ENCODE measurements at regions of chr1 and their contacts with region 1.

Region 1: GRCh38 chr1:171485375-171486047 is at the start of gene PRRC2C:
- DNase-seq: peak; percentile 100
- ATAC-seq: peak; percentile 95
- H3K4me3 ChIP-seq: peak within 1 kb of the TSS; percentile 82
- H3K27ac ChIP-seq: peak within 1 kb of the TSS; percentile 84
- H3K4me1 ChIP-seq: peaks cover 33% of the 10 kb centered on the region
- H3K27me3 ChIP-seq: no peaks in the 10 kb centered on the region
- CTCF ChIP-seq: no peak; the same call in 1 of the 2 replicates
- total RNA-seq, gene PRRC2C: 199 and 225 TPM in 2 replicates

Region 2: DNA sequence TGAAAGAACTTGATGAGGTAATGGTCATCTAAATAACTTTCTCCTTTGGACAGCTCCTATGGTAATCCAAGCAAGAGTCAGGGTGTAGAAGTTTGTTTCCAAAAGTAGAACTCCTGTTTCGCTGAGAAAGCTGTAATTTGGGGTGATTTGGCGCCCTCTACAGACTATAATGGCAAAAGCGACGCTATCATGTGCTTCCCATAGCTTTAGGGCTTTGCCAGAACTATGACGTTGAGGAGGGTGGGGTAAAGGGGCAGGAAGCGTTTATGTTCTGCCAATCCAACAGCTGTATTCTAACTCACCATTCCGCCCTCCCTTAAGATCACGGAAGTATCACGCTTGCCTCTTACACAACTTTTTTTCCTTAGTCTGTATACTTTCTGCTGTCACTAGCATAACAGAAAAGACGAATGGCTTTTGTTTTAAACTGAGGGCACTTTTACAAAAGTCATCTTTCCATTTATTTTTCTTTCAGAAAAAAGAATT is 171.6 kb before region 1 on chr1 and contains the start of gene FMO4:
- CTCF ChIA-PET with region 1: interaction called, 16 read pairs
- POLR2A ChIA-PET with region 1: no interaction called
- intact Hi-C with region 1: loop called (anchors 1 kb)
- DNase-seq: peak; percentile 100
- ATAC-seq: peak; percentile 100
- H3K4me3 ChIP-seq: peak within 1 kb of the TSS; percentile 41
- H3K27ac ChIP-seq: no peak within 1 kb of the TSS
- H3K4me1 ChIP-seq: peaks cover 6% of the 10 kb centered on the region
- H3K27me3 ChIP-seq: peaks cover 21% of the 10 kb centered on the region
- CTCF ChIP-seq: peak; percentile 99
- total RNA-seq, gene FMO4: 0.23 and 0.98 TPM in 2 replicates

Region 3: DNA sequence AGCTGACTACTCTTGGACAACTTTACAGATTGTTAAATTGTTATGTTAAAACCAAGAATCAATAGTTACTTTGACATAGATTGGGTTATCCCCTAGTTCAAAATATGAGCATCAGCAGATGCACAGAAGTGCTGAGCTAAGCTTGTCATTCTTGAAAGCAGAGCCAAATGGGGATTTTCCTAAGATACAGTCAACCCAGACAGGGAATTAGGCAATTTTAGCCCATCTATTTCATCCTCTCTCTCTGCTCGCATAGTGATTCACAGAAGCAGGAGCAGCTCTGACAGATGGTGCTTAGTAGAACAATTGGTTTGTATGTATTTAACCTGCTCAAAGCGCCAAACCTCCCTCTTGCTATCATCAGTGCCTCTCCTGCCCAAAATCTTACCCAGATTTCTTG is 28.1 kb before region 1 on chr1:
- CTCF ChIA-PET with region 1: interaction called, 6 read pairs
- POLR2A ChIA-PET with region 1: interaction called, 3 read pairs
- intact Hi-C with region 1: loop called (anchors 2 kb)
- DNase-seq: peak; percentile 26
- ATAC-seq: peak; percentile 59
- H3K4me3 ChIP-seq: no peak overlapping the region
- H3K27ac ChIP-seq: no peak overlapping the region
- H3K4me1 ChIP-seq: peaks cover 14% of the 10 kb centered on the region
- H3K27me3 ChIP-seq: no peaks in the 10 kb centered on the region
- CTCF ChIP-seq: no peak

Region 4: GRCh38 chr1:171513743-171514142 is 28.2 kb after region 1 on chr1:
- CTCF ChIA-PET with region 1: no interaction called
- POLR2A ChIA-PET with region 1: no interaction called
- intact Hi-C with region 1: loop called (anchors 1 kb)
- DNase-seq: peak; percentile 44
- ATAC-seq: peak; percentile 88
- H3K4me3 ChIP-seq: no peak overlapping the region
- H3K27ac ChIP-seq: no peak overlapping the region
- H3K4me1 ChIP-seq: peaks cover 9% of the 10 kb centered on the region
- H3K27me3 ChIP-seq: no peaks in the 10 kb centered on the region
- CTCF ChIP-seq: no peak

Region 5: GRCh38 chr1:171715813-171716251 is 230.3 kb after region 1 on chr1:
- CTCF ChIA-PET with region 1: interaction called, 4 read pairs
- POLR2A ChIA-PET with region 1: no interaction called
- intact Hi-C with region 1: loop called (anchors 5 kb)
- DNase-seq: peak; percentile 82
- ATAC-seq: peak; percentile 58
- H3K4me3 ChIP-seq: no peak overlapping the region
- H3K27ac ChIP-seq: no peak overlapping the region
- H3K4me1 ChIP-seq: no peaks in the 10 kb centered on the region
- H3K27me3 ChIP-seq: no peaks in the 10 kb centered on the region
- CTCF ChIP-seq: peak; percentile 94

Measured in PC-3 (cell line).